Posterior vena cava (tissue), 2 donors: ENCODE measurements at regions of chr5 and their contacts with region 1.

Region 1: GRCh38 chr5:139711067-139711905 is 63.1 kb downstream of the CXXC5 start:
- DNase-seq: peak; percentile 87

Region 2: GRCh38 chr5:139690064-139690802 is 21.1 kb before region 1 on chr5:
- intact Hi-C with region 1: no loop called
- DNase-seq: peak; percentile 88

Region 3: GRCh38 chr5:139765409-139766217 is 54.3 kb after region 1 on chr5:
- intact Hi-C with region 1: loop called (anchors 2 to 5 kb)
- DNase-seq: peak; percentile 92